ENCODE measurements at regions of chr11 and their contacts with region 1.

Region 1: GRCh38 chr11:83724008-83724461 is 437.9 kb upstream of the CCDC90B start:
- DNase-seq: no peak
- H3K4me3 ChIP-seq: peak overlapping the region; percentile 9 to 40 (median 36)
- H3K27ac ChIP-seq: peak overlapping the region; percentile 48 to 71 (median 63)
- H3K4me1 ChIP-seq: peaks cover 0 to 26% (median 18%) of the 10 kb centered on the region in 4 donors
- H3K27me3 ChIP-seq: no peaks in the 10 kb centered on the region
- CTCF ChIP-seq: peak in 1 of 4 experiments; percentile 32
- EP300 ChIP-seq: no peak
- POLR2A ChIP-seq: no peak

Region 2: GRCh38 chr11:83809274-83809673 is 85.2 kb after region 1 on chr11:
- intact Hi-C with region 1: loop called (anchors 5 kb)
- DNase-seq: no peak
- H3K4me3 ChIP-seq: no peak overlapping the region
- H3K27ac ChIP-seq: peak overlapping the region in 3 of 4 donors; percentile 9 to 62 (median 56)
- H3K4me1 ChIP-seq: peaks cover 0 to 31% (median 22%) of the 10 kb centered on the region in 4 donors
- H3K27me3 ChIP-seq: no peaks in the 10 kb centered on the region
- CTCF ChIP-seq: no peak
- EP300 ChIP-seq: peak in 2 of 4 donors; percentile 43 to 68
- POLR2A ChIP-seq: no peak